Heart left ventricle (tissue), 16 donors: ENCODE measurements at regions of chr10 and their contacts with region 1.

Region 1: GRCh38 chr10:21732067-21732772 is 198.2 kb downstream of the MLLT10 start:
- DNase-seq: peak; percentile 59 to 79 (median 64)
- ATAC-seq: peak; percentile 87 to 96 (median 94)
- H3K4me3 ChIP-seq: no peak overlapping the region
- H3K27ac ChIP-seq: no peak overlapping the region
- H3K4me1 ChIP-seq: peaks cover 0 to 10% (median 4%) of the 10 kb centered on the region in 12 donors
- H3K27me3 ChIP-seq: no peaks in the 10 kb centered on the region
- CTCF ChIP-seq: peak; percentile 77 to 94 (median 88)
- POLR2A ChIP-seq: no peak

Region 2: GRCh38 chr10:21078410-21079329 is 653.5 kb before region 1 on chr10:
- intact Hi-C with region 1: loop called in 3 of 10 experiments (anchors 10 kb)
- DNase-seq: peak in 4 of 5 donors; percentile 62 to 67 (median 65)
- ATAC-seq: peak; percentile 73 to 91 (median 79)
- H3K4me3 ChIP-seq: no peak overlapping the region
- H3K27ac ChIP-seq: peak overlapping the region in 6 of 12 donors; percentile 9 to 68 (median 49)
- H3K4me1 ChIP-seq: peaks cover 0 to 11% (median 0%) of the 10 kb centered on the region in 12 donors
- H3K27me3 ChIP-seq: no peaks in the 10 kb centered on the region
- CTCF ChIP-seq: peak; percentile 60 to 88 (median 77)
- POLR2A ChIP-seq: no peak

Region 3: DNA sequence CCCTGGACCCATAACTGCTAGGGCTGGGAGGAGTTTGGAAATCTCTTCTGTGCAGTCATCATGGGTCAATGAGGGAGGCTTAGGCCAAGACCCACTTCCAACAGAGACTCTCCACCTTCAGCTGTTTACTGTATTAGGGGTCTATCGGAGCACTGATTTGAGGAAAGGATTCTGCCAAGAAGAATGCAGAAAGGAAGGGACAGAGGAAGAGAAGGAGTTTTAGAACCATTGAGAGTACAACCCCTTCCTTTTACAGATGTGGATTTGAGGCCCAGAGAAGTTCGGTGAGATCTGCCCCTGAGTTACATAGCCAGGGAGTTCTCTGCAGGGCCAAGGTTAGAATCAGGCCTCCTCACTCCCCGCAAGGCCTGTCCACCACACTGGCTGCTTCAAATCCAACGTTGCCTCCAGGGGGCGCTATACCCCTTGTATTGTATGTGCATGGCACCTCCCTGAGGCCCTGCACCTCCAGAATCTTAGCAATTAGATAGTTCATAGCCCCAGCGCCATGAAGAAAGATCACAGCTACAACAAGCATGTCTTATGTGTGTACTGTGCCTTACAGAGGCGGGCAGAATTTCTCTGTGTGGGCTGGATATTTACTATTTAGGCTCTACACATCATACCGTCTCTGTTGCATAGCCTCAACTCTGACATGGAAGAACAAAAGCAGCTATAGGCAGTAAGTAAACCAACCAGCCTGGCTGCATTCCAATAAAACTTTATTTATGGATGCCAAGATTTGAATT is 453.6 kb before region 1 on chr10:
- intact Hi-C with region 1: loop called (anchors 1 to 10 kb)
- DNase-seq: peak; percentile 91 to 96 (median 95)
- ATAC-seq: peak; percentile 95 to 99 (median 98)
- H3K4me3 ChIP-seq: no peak overlapping the region
- H3K27ac ChIP-seq: peak overlapping the region in 3 of 12 donors; percentile 13 to 51 (median 14)
- H3K4me1 ChIP-seq: peaks cover 0 to 6% (median 3%) of the 10 kb centered on the region in 12 donors
- H3K27me3 ChIP-seq: no peaks in the 10 kb centered on the region
- CTCF ChIP-seq: peak; percentile 81 to 91 (median 82)
- POLR2A ChIP-seq: no peak

Region 4: GRCh38 chr10:21516242-21517131 is 215.7 kb before region 1 on chr10:
- intact Hi-C with region 1: loop called in 1 of 10 experiments (anchors 5 kb)
- DNase-seq: peak; percentile 56 to 83 (median 63)
- ATAC-seq: peak in 3 of 4 donors; percentile 37 to 71 (median 47)
- H3K4me3 ChIP-seq: peak overlapping the region; percentile 52 to 80 (median 70)
- H3K27ac ChIP-seq: peak overlapping the region; percentile 47 to 90 (median 84)
- H3K4me1 ChIP-seq: peaks cover 0 to 48% (median 15%) of the 10 kb centered on the region in 12 donors
- H3K27me3 ChIP-seq: peaks cover 0 to 59% (median 0%) of the 10 kb centered on the region in 9 donors
- CTCF ChIP-seq: no peak
- POLR2A ChIP-seq: no peak

Region 5: DNA sequence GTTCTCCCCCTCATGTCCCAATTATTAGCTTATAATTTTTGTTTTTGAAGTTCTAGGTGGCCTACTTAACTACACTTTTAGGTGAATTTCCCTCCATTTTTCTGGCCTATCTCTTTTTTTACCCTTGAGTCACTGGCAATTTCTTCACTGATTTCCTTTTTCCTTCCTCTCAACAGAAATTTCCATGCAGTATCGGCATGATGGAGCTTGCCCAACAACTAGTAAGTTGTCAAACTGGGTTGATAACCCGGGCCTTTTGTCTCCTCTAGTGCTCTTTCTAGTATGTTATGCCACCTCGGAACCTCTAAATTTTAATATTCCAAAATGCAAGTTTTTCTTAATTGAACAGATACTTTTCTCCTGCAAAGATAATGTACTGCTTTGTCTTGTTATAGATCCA is 51.1 kb before region 1 on chr10:
- intact Hi-C with region 1: no loop called
- DNase-seq: no peak
- ATAC-seq: no peak
- H3K4me3 ChIP-seq: no peak overlapping the region
- H3K27ac ChIP-seq: no peak overlapping the region
- H3K4me1 ChIP-seq: peaks cover 0 to 19% (median 2%) of the 10 kb centered on the region in 12 donors
- H3K27me3 ChIP-seq: no peaks in the 10 kb centered on the region
- CTCF ChIP-seq: no peak
- POLR2A ChIP-seq: no peak

Region 6: DNA sequence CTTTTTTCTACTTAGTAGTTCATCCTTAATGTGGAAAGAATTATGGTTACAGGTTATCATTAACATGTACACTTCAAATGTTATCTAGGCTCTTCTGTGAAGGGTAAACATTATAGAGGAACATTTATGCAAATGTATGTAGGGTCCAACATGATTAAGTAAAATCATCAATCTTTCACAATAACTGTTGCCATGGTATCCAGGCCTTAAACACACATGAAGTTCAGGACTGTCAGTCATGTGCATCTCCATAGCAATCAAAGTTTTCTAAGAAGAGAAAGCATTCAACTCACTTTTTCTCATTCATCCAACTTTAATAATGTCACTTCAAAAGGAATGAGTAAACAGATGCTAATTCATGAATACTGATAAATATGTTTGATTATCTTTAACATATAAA is 187.7 kb after region 1 on chr10:
- intact Hi-C with region 1: no loop called
- DNase-seq: no peak
- ATAC-seq: no peak
- H3K4me3 ChIP-seq: no peak overlapping the region
- H3K27ac ChIP-seq: no peak overlapping the region
- H3K4me1 ChIP-seq: no peaks in the 10 kb centered on the region
- H3K27me3 ChIP-seq: no peaks in the 10 kb centered on the region
- CTCF ChIP-seq: no peak
- POLR2A ChIP-seq: no peak

Region 7: DNA sequence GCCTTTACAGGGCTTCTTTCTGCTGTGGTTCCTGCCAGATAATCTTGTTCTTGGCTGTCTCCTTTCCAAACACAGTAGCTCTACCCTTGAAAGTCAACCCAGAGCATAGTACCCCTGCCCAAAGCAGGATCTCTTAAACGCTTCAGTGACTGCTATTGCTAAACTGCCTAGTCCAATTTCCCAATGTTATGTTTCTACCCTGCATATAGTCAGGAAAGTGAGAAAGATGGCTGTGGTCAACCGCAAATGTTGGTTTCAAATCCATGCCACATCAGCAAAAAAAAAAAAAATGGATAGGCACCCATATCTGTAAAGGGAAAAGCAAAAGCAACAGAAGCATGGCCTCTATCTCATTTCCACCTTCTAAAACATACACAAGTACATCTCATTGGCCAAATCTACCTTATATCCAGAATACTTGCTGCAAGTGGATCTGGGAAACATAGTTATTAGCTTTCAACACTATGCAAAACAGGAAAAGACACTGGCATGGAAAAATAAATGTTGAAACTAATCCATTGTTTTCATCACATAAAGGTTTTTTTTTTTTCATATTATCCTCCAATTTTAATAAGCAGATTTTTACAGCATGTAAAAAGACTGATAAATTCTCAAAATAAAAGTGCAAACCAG is 211.5 kb after region 1 on chr10:
- intact Hi-C with region 1: loop called in 1 of 10 experiments (anchors 10 kb)
- DNase-seq: no peak
- ATAC-seq: no peak
- H3K4me3 ChIP-seq: no peak overlapping the region
- H3K27ac ChIP-seq: no peak overlapping the region
- H3K4me1 ChIP-seq: peaks cover 0 to 27% (median 15%) of the 10 kb centered on the region in 12 donors
- H3K27me3 ChIP-seq: no peaks in the 10 kb centered on the region
- CTCF ChIP-seq: no peak
- POLR2A ChIP-seq: no peak